Endothelial cell of umbilical vein (primary cell): ENCODE measurements at regions of chr19 and their contacts with region 1.

Region 1: DNA sequence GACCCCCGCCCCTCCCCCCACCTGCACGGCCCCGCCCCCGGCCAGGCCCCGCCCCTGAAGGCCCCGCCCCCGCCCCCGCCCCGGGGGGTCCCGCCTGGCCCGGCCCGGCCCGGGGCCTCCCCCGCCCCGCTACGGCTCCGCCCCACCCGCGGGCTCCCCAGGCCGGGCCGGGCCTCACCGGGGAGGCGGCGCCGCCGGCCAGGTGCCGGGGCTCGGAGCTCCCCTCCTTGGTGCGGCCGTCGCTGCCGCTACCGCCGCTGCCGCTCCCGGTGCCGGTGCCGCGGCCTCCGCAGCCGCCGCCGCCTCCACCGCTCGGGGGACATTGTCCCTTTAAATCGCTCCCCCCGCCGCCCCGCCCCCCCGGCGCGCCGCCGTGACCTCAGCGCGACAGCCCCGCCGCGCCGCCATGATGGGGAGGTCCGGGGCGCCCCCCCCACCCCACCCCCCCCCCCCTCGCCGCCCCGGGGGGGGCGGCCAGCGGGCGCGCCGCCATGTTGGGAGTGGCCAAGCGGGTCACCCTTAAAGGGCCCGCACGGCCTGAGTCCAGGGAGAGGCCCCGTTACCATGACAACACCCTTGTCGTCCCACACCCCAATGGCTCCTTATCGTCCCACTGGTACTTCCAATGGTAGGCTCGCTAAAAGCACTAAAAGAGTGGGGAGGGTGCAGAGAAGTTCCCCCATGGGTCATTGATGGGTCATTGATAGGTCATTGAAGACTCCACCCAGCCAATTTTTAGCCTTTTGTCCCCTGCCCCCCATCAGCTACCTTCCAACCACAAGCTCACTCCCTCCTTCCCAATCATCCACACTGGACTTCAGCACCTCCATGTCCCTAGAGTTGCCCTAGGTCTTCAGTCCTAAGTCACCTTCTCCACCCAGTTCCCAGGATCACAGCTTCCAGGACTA is at the start of gene WIZ:
- DNase-seq: peak; percentile 56
- H3K4me3 ChIP-seq: peak within 1 kb of the TSS in 2 of 3 experiments; percentile 9 to 64
- H3K27ac ChIP-seq: no peak within 1 kb of the TSS
- H3K4me1 ChIP-seq: peaks cover 17% of the 10 kb centered on the region
- H3K27me3 ChIP-seq: no peaks in the 10 kb centered on the region
- CTCF ChIP-seq: no peak
- POLR2A ChIP-seq: no peak
- total RNA-seq, gene WIZ: 47.2 and 50.8 TPM in 2 replicates

Region 2: GRCh38 chr19:15354566-15355296 is 95.1 kb before region 1 on chr19:
- CTCF ChIA-PET with region 1: no interaction called
- POLR2A ChIA-PET with region 1: no interaction called
- dilution Hi-C with region 1: no loop called
- intact Hi-C with region 1: no loop called
- DNase-seq: no peak
- H3K4me3 ChIP-seq: no peak overlapping the region
- H3K27ac ChIP-seq: no peak overlapping the region
- H3K4me1 ChIP-seq: no peaks in the 10 kb centered on the region
- H3K27me3 ChIP-seq: no peaks in the 10 kb centered on the region
- CTCF ChIP-seq: no peak
- POLR2A ChIP-seq: peak; percentile 43

Region 3: DNA sequence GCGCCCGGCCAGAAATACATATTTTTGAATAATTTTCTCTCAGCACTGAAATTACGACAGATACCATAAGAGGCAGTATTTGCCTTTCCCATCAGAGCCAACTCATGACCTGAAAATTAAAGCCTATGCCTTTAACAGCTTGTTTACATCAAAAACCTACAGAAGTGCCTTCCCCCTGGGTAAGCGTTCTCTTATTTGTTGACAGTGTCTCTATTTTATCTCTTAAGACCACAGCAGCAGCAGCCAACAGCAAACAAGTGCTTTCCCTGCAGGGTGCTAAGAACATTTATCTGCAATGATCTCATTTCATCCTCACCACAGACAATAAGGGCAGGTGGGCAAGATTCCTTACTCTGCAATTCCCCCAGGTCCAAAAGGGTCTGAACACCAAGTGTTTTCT is 37.0 kb before region 1 on chr19:
- CTCF ChIA-PET with region 1: no interaction called
- POLR2A ChIA-PET with region 1: no interaction called
- dilution Hi-C with region 1: no loop called
- intact Hi-C with region 1: no loop called
- DNase-seq: no peak
- H3K4me3 ChIP-seq: no peak overlapping the region
- H3K27ac ChIP-seq: no peak overlapping the region
- H3K4me1 ChIP-seq: peaks cover 11% of the 10 kb centered on the region
- H3K27me3 ChIP-seq: no peaks in the 10 kb centered on the region
- CTCF ChIP-seq: no peak
- POLR2A ChIP-seq: no peak

Region 4: DNA sequence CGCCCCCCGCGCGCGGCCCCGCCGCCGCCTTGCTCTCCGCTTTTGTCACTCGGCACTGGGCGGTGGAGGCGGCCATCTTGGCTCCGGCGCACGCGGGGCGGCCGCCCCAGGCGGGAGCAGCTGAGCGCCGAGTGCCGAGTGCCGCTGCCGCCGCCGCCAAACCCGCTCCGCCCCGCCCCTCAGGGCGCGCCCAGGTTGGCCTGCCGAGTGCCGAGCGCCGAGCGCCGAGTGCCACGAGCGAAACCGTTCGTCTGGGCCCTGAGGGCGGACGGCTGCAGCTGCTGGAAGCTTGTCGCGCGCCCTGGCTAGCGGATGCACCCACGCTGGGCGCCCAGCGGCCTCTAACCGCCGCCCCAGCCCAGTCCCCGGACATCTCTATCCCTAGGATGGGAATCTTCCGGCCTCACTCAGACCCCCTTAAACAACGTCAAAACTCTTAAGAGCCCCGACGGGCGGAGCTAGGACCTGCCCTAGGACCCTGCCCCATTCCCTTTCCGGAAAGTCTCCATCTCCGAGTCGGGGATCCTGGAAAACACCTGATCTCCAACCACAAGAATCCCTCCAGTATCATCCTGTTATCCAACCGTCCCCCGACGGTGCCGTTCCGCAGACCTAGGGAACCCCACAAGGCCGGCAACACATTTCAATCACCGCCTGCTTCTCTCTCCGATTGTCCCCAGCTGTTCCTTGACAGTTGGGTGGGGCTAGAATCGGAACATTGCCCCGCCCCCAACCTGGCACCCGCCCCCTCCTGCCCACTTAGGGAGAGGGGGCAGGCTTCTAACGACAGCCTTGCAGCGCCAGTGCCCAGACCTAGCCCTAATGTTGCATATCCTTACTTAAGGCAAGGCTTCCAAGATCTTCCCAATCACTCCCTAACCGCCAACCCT is 17.0 kb before region 1 on chr19:
- CTCF ChIA-PET with region 1: interaction called, 5 read pairs
- POLR2A ChIA-PET with region 1: interaction called, 5 read pairs
- dilution Hi-C with region 1: no loop called
- intact Hi-C with region 1: loop called (anchors 1 kb)
- DNase-seq: peak; percentile 88
- H3K4me3 ChIP-seq: peak overlapping the region; percentile 52 to 77 (median 71)
- H3K27ac ChIP-seq: peak overlapping the region; percentile 25
- H3K4me1 ChIP-seq: peaks cover 12% of the 10 kb centered on the region
- H3K27me3 ChIP-seq: no peaks in the 10 kb centered on the region
- CTCF ChIP-seq: no peak
- POLR2A ChIP-seq: peak; percentile 75

Region 5: GRCh38 chr19:15466851-15467733 is 17.2 kb after region 1 on chr19:
- CTCF ChIA-PET with region 1: interaction called, 29 read pairs
- POLR2A ChIA-PET with region 1: interaction called, 4 read pairs
- dilution Hi-C with region 1: no loop called
- intact Hi-C with region 1: loop called (anchors 1 kb)
- DNase-seq: peak; percentile 99
- H3K4me3 ChIP-seq: no peak overlapping the region
- H3K27ac ChIP-seq: peak overlapping the region; percentile 41
- H3K4me1 ChIP-seq: peaks cover 39% of the 10 kb centered on the region
- H3K27me3 ChIP-seq: peaks cover 0 to 2% of the 10 kb centered on the region in 2 experiments
- CTCF ChIP-seq: no peak
- POLR2A ChIP-seq: peak; percentile 45

Region 6: DNA sequence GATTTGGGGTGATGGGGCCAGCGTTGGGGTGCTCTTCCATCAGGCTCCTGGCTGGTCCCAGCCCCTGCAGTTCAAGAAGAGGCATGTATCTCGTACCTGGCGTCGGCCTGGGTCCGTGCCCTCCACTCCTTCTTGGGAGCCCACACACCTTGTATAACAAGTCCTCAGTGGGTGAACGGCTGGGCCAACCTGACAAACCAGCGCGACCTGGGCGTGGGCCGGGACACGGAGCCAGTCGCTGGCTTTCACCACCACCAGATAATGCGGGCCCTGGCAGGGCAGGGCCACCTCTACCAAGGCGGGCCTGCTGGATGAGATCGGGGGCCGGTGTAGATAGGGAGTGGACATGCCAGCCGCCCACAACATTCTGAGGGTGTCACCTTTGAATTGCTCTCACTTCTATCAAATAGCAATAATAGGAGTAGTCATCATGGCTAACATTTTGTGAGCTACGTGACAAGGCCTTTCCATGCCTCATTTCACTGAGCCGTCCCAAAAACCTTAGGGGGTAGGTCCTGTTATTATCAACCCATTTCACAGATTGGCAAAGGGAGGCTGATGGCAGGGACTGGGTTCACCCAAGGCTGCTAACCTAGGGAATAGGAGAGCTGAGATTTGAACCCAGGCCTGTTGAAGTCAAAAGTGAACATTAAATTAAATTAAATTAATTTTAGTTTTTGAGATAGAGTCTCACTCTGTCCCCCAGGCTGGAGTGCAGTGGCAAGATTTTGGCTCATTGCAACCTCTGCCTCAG is 62.0 kb after region 1 on chr19:
- CTCF ChIA-PET with region 1: no interaction called
- POLR2A ChIA-PET with region 1: no interaction called
- dilution Hi-C with region 1: no loop called
- intact Hi-C with region 1: no loop called
- DNase-seq: no peak
- H3K4me3 ChIP-seq: no peak overlapping the region
- H3K27ac ChIP-seq: no peak overlapping the region
- H3K4me1 ChIP-seq: no peaks in the 10 kb centered on the region
- H3K27me3 ChIP-seq: peaks cover 15 to 18% of the 10 kb centered on the region in 2 experiments
- CTCF ChIP-seq: no peak
- POLR2A ChIP-seq: no peak